Mammary epithelial cell (primary cell): ENCODE measurements at regions of chr12 and their contacts with region 1.

Region 1: DNA sequence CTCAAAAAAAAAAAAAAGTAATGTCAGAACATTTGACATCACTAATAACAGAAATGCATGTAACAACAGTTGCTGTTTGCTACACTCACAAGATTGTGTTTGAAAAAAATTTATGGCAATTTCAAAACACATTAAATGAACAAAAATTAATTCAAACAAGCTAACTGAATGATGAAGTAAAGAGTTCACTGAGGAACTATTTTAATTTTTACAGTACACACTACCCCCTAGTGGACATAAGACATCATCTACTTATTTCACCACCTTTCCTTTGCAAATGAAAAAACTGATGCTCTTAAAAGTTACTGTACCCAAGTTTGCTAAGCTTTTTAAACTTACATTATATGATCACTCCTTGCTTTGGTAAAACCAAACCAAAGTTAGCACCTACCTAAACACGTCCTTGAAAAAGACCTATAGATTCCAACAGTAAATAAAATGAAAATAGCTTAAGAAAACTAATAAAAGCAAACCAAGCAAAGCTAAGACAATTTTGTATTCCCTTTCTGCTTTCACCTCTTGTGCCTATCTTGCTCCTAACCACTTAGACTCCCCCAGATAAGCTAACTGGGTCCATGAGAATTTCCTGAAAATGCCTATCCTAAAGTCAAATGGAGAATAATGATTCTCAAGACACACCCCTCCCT is 22.2 kb downstream of the UBE2N start:
- DNase-seq: peak; percentile 32
- H3K4me3 ChIP-seq: no peak overlapping the region
- H3K27ac ChIP-seq: no peak overlapping the region
- H3K4me1 ChIP-seq: no peaks in the 10 kb centered on the region
- H3K27me3 ChIP-seq: no peaks in the 10 kb centered on the region
- CTCF ChIP-seq: peak; percentile 43 to 55

Region 2: DNA sequence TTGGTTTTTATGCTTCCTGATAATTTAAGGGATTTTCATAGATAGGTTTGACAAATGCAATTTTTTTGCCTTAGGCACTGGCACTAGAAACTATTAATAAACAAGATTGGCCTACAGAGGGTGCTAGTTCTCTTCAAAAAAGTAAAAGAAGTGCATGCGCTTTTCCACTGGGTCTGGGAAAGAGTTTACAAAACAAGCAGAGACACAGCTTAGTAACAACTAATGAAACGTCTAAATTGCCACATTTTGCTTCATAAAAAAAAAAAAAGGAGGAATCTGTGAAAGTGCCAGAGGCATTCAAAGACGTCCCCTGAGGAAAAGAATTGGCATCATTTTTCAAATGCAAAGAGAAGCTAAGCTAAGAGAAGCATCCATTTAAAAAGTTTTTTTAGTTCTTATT is 432.1 kb before region 1 on chr12:
- CTCF ChIA-PET with region 1: interaction called, 3 read pairs
- dilution Hi-C with region 1: no loop called
- in situ Hi-C with region 1: no loop called
- intact Hi-C with region 1: loop called (anchors 1 kb)
- DNase-seq: peak; percentile 58
- H3K4me3 ChIP-seq: no peak overlapping the region
- H3K27ac ChIP-seq: no peak overlapping the region
- H3K4me1 ChIP-seq: peaks cover 5% of the 10 kb centered on the region
- H3K27me3 ChIP-seq: no peaks in the 10 kb centered on the region
- CTCF ChIP-seq: peak; percentile 45 to 53